Ascending aorta (tissue), 2 donors: ENCODE measurements at regions of chr1 and their contacts with region 1.

Region 1: DNA sequence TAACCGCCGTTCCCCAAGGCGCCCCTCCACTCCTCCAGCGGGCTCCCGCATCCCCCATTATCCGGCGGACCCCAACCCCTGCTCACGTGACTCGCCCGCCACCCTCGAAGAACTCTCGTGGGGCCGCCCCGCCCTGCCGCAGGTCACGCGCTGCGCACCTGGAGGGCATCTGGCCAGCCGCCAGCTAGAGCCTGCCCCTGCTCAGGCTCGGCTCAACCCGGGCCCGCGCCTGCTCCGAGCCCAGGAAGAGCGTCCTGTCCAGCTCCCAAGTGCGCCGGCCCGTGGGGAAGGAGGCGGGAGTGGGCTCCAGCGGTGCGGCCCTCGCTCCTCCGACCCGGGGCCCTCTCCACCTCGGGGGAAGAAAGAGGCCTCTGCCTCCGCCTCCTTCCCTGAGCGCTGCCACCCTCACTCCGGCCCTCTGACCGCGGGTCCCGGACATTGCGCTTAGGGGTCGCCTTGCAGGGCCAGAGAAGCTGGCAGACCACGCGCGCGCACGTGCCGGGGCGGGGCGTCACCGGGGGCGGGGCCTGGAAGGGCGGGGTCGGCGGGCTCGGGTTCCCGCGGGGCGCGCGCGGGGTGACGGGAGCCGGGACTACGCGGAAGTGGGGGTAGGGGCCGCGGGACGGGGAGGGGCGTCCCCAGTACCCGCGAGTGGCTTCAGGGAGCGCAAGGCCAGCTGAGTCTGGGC is 28.4 kb downstream of the HMGN2 start:
- DNase-seq: peak; percentile 41 to 92
- H3K4me3 ChIP-seq: peak overlapping the region; percentile 90 to 95
- H3K27ac ChIP-seq: peak overlapping the region; percentile 81 to 83
- H3K4me1 ChIP-seq: peaks cover 0 to 7% of the 10 kb centered on the region in 2 donors
- H3K27me3 ChIP-seq: no peaks in the 10 kb centered on the region
- CTCF ChIP-seq: no peak

Region 2: GRCh38 chr1:26378088-26378878 is 122.3 kb before region 1 on chr1:
- intact Hi-C with region 1: no loop called
- DNase-seq: no peak
- H3K4me3 ChIP-seq: no peak overlapping the region
- H3K27ac ChIP-seq: no peak overlapping the region
- H3K4me1 ChIP-seq: no peaks in the 10 kb centered on the region
- H3K27me3 ChIP-seq: no peaks in the 10 kb centered on the region
- CTCF ChIP-seq: no peak

Region 3: GRCh38 chr1:26472901-26473845 is 27.5 kb before region 1 on chr1:
- intact Hi-C with region 1: loop called (anchors 2 kb)
- DNase-seq: peak; percentile 80 to 97
- H3K4me3 ChIP-seq: peak overlapping the region; percentile 72 to 90
- H3K27ac ChIP-seq: peak overlapping the region; percentile 94 to 100
- H3K4me1 ChIP-seq: peaks cover 5 to 22% of the 10 kb centered on the region in 2 donors
- H3K27me3 ChIP-seq: no peaks in the 10 kb centered on the region
- CTCF ChIP-seq: no peak

Region 4: DNA sequence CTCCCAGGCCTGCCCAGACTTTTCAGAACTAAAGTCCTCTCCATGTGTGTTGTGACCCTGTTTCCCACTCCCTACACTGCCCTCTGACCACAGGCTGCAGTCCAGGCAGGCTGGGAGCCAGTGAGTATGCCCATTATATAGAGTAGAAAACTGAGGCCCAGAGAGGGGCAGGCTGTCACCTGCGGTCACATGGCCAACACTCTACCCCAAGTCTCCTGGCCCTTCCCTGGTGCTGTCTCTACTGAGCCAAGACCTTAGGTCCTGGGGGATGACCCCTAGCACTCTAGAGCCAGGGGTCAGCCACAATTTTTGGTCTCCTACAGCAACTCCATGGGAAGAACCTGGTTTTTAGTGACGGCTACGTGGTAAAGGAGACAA is 59.8 kb after region 1 on chr1:
- intact Hi-C with region 1: no loop called
- DNase-seq: no peak
- H3K4me3 ChIP-seq: no peak overlapping the region
- H3K27ac ChIP-seq: no peak overlapping the region
- H3K4me1 ChIP-seq: no peaks in the 10 kb centered on the region
- H3K27me3 ChIP-seq: no peaks in the 10 kb centered on the region
- CTCF ChIP-seq: no peak